GM10248 (cell line): ENCODE measurements at regions of chr7 and their contacts with region 1.

Region 1: GRCh38 chr7:137820677-137821420 is 25.9 kb downstream of the DGKI start:
- DNase-seq: peak; percentile 44
- CTCF ChIP-seq: no peak

Region 2: DNA sequence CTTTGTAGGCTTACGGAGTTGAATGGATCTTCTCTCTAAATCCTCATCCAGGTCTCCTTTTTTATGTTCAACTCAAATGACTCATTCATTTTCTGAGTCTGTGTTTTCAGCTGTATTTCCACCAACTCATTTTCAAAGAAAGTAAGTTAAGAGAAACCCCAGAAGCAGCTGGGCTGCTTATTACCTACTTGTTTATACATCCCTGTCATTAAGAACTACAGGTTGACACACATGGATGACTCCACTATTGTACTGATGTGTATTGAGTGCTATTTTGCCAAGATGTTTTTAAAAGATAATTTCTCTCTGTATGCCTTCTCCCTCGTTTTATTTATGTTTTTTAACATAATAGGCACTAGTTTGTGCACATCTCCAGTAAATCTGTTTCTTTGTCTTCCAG is 16.0 kb before region 1 on chr7:
- CTCF ChIA-PET with region 1: interaction called, 23 read pairs
- POLR2A ChIA-PET with region 1: no interaction called
- DNase-seq: no peak
- CTCF ChIP-seq: no peak

Region 3: GRCh38 chr7:137839903-137840779 is 19.3 kb after region 1 on chr7:
- CTCF ChIA-PET with region 1: interaction called, 22 read pairs
- POLR2A ChIA-PET with region 1: interaction called, 3 read pairs
- DNase-seq: no peak
- CTCF ChIP-seq: no peak